HCT116 (cell line): ENCODE measurements at regions of chr17 and their contacts with region 1.

Region 1: GRCh38 chr17:57833179-57833939 is 16.5 kb downstream of the MRPS23 start:
- DNase-seq: peak; percentile 69
- ATAC-seq: peak; percentile 77
- H3K4me3 ChIP-seq: no peak overlapping the region
- H3K27ac ChIP-seq: no peak overlapping the region
- H3K4me1 ChIP-seq: peaks cover 0 to 15% of the 10 kb centered on the region in 2 experiments; a peak in 2 of 4 replicates
- H3K27me3 ChIP-seq: no peaks in the 10 kb centered on the region
- CTCF ChIP-seq: peak; percentile 86 to 100 (median 97)
- POLR2A ChIP-seq: no peak
- RAD21 ChIP-seq: peak; percentile 88

Region 2: DNA sequence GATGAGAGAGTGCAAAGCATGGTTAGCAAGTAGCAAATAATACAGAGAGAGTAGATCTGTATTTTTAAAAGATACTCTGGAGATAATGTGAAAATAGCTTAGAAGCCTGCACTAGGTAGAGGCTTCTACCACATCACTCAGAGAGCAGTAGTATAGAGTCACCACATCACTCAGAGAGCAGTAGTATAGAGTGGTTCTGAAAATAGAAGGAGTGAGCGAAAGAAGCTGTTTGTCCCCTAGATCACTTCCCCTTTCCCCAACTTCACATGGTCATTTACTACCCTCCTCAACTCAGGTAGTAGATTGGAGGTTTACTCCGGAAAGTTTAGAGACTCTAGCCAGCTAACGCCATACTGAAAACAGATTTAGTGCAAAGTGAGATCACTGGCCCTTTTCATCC is 982.4 kb before region 1 on chr17:
- CTCF ChIA-PET with region 1: no interaction called
- POLR2A ChIA-PET with region 1: no interaction called
- RAD21 ChIA-PET with region 1: no interaction called
- intact Hi-C with region 1: loop called (anchors 5 kb)
- DNase-seq: no peak
- ATAC-seq: no peak
- H3K4me3 ChIP-seq: no peak overlapping the region
- H3K27ac ChIP-seq: no peak overlapping the region
- H3K4me1 ChIP-seq: no peaks in the 10 kb centered on the region
- H3K27me3 ChIP-seq: no peaks in the 10 kb centered on the region
- CTCF ChIP-seq: no peak
- POLR2A ChIP-seq: no peak
- RAD21 ChIP-seq: no peak

Region 3: DNA sequence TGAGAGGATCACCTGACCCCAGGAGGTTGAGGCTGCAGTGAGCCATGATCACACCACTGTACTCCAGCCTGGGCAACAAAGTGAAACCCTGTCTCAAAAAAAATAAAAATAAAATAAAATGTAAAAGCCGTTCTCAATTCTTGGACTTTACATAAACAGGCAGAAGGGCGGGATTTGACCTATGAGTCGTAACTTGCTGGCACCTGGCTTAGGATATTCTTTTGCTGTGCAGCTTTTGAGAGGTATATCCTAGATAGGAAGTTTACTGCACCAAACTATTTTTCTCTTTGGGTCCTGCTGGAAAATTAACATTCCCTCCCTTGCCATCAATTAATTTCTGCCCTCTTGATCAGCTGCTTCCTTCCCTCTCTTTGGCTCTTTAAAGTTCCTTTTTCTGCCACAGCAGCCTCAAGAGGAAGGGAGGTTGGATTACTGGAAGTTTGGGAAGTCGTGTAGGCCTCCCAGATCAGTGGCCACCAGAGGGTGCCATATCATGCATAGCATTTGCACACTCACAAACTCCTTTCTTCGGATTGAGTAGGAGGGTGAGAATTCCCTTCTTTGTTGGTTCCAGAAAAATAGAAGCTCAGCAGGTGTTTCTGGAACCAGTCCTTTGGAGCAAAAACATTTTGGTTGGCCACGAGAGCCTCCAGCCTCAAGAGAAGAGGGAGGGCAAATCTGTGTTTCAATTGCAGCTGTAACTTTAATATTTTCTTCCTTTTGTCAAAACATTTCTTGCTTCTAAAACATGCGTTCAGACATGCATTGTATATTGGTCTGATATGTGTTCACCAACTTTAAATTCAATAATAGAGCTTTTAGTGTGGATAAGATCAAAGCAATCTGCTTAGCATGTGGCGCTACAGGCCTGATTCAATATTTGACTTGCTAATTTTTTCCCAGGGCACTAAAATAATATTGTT is 235.6 kb before region 1 on chr17:
- CTCF ChIA-PET with region 1: interaction called, 13 read pairs
- POLR2A ChIA-PET with region 1: no interaction called
- RAD21 ChIA-PET with region 1: no interaction called
- intact Hi-C with region 1: loop called (anchors 5 kb)
- DNase-seq: peak; percentile 65
- ATAC-seq: peak; percentile 91
- H3K4me3 ChIP-seq: no peak overlapping the region
- H3K27ac ChIP-seq: peak overlapping the region; percentile 37; the same call in 1 of the 2 replicates
- H3K4me1 ChIP-seq: peaks cover 5 to 13% of the 10 kb centered on the region in 2 experiments; a peak in 3 of 4 replicates
- H3K27me3 ChIP-seq: no peaks in the 10 kb centered on the region
- CTCF ChIP-seq: peak; percentile 93 to 98 (median 98)
- POLR2A ChIP-seq: no peak
- RAD21 ChIP-seq: peak; percentile 80

Region 4: DNA sequence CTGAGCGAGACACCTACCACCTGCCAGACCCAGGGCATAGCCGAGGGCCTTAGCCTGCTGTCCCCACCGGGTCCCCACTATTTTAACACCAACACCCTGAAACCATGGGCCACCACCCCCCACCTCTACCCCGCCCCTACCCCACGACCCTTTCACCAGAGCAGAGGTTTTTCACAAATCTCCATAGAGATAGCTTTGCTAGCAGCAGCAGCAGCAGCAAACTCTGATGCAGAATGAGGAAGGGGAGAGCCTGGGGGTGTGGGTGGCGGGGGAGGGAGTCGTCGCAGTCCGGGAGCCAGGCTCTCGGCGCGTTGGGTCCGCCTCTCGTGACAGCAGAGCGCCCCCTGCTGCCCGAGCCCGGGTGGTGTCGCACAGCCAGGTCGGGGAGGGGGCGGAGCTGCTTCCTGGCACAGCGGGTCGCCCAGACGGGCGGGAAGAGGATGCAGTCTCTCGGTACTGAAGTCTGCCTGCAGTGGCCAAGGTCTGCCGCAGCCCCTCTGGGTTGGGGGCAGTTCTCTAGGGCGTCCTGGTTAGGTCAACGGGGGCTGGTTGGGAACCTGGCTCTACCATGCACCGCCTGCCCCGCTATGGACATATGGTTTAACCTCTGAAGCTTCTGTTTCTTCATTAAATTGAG is 50.1 kb before region 1 on chr17:
- CTCF ChIA-PET with region 1: interaction called, 10 read pairs
- POLR2A ChIA-PET with region 1: no interaction called
- RAD21 ChIA-PET with region 1: no interaction called
- intact Hi-C with region 1: no loop called
- DNase-seq: peak; percentile 18
- ATAC-seq: peak; percentile 98
- H3K4me3 ChIP-seq: peak overlapping the region in 1 of 2 experiments; percentile 13; a peak in 1 of 4 replicates
- H3K27ac ChIP-seq: no peak overlapping the region
- H3K4me1 ChIP-seq: peaks cover 7 to 11% of the 10 kb centered on the region in 2 experiments; a peak in 2 of 4 replicates
- H3K27me3 ChIP-seq: peaks cover 20% of the 10 kb centered on the region
- CTCF ChIP-seq: peak; percentile 78 to 100 (median 99)
- POLR2A ChIP-seq: no peak
- RAD21 ChIP-seq: peak; percentile 83

Region 5: GRCh38 chr17:57810721-57811637 is 22.4 kb before region 1 on chr17:
- CTCF ChIA-PET with region 1: interaction called, 13 read pairs
- POLR2A ChIA-PET with region 1: no interaction called
- RAD21 ChIA-PET with region 1: no interaction called
- intact Hi-C with region 1: no loop called
- DNase-seq: no peak
- ATAC-seq: no peak
- H3K4me3 ChIP-seq: no peak overlapping the region
- H3K27ac ChIP-seq: no peak overlapping the region
- H3K4me1 ChIP-seq: no peaks in the 10 kb centered on the region
- H3K27me3 ChIP-seq: peaks cover 18% of the 10 kb centered on the region
- CTCF ChIP-seq: no peak
- POLR2A ChIP-seq: no peak
- RAD21 ChIP-seq: no peak

Region 6: GRCh38 chr17:57849874-57850754 is 16.8 kb after region 1 on chr17 and contains the start of gene MRPS23:
- CTCF ChIA-PET with region 1: interaction called, 12 read pairs
- POLR2A ChIA-PET with region 1: no interaction called
- RAD21 ChIA-PET with region 1: no interaction called
- intact Hi-C with region 1: no loop called
- DNase-seq: peak; percentile 98
- ATAC-seq: peak; percentile 92
- H3K4me3 ChIP-seq: peak within 1 kb of the TSS; percentile 88 to 94
- H3K27ac ChIP-seq: peak within 1 kb of the TSS; percentile 71
- H3K4me1 ChIP-seq: peaks cover 12 to 34% of the 10 kb centered on the region in 2 experiments
- H3K27me3 ChIP-seq: no peaks in the 10 kb centered on the region
- CTCF ChIP-seq: no peak
- POLR2A ChIP-seq: peak; percentile 11
- RAD21 ChIP-seq: no peak
- total RNA-seq, gene MRPS23: 109 TPM